ENCODE measurements at regions of chr15 and their contacts with region 1.

Region 1: DNA sequence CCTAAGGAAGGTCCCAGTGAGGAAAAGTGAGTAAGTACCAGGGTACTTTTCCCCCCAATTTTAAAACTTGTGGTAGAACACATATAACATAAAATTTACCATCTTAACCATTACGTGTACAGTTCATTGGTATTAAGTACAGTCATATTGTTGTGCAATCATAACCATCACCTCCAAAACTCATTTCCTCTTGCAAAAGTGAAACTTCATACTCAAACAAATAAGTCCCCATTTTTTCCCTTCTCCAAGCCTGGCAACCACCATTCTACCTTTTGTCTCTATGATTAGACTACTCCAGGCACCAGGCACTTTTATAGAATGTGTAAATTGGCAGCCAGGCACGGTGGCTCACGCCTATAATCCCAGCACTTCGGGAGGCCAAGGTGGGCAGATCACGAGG is 12.2 kb downstream of the PRC1 start:
- DNase-seq: no peak
- ATAC-seq: no peak
- H3K4me3 ChIP-seq: no peak overlapping the region
- H3K27ac ChIP-seq: no peak overlapping the region
- H3K4me1 ChIP-seq: peaks cover under 1 to 4% of the 10 kb centered on the region in 2 experiments; a peak in 2 of 5 replicates
- H3K27me3 ChIP-seq: no peaks in the 10 kb centered on the region
- CTCF ChIP-seq: no peak
- EP300 ChIP-seq: no peak
- POLR2A ChIP-seq: no peak
- RAD21 ChIP-seq: no peak

Region 2: DNA sequence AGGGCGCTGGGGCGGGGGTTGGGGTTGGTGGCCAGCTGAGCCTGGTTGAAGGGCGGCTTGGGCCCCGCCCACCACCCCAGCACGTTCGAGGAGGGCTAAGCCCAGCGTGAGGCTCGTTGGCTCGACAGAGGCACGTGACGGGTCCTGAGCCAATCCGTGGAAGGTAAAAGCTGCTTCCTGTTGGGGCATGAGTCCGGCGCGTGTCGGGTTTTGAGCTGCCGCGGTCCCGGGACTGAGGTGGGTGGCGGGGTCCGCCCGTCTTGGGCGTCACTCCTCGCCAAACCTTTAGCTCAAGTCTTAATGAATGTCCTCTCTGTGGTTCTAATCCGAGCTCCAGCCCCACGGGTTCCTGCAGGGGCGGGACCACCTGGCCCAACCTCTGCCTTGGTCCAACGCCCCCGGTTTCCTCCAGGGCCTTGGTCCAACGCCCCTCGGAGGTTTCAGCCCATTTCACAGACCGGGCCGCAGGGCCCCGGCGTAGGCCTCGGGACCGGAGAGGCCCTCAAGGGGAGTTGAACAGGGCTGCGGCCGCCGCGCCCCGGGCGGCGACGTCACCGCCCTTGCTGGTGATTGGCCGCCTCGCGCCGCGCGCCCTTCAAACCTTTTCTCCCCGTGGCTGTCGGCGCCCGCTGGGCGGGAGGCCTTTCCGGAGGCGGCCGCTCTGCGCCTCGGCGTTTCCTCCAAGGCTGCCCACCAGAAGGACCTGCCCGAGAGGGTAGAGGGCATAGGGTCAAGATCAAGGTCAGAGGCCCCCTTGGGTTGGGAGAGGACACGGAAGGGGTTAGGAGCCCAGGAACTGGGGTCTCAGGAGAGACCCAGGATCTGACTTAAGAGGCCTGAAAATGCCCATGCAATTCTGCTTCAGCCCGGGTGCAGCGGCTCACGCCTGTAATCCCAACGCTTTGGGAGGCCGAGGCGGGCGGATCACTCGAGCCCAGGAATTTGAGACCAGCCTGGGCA is 27.1 kb before region 1 on chr15 and contains the start of gene RCCD1:
- CTCF ChIA-PET with region 1: no interaction called
- POLR2A ChIA-PET with region 1: interaction called, 10 read pairs
- in situ Hi-C with region 1: no loop called
- intact Hi-C with region 1: no loop called
- DNase-seq: peak; percentile 97 to 98 (median 98)
- ATAC-seq: peak; percentile 96
- H3K4me3 ChIP-seq: peak within 1 kb of the TSS; percentile 50
- H3K27ac ChIP-seq: peak within 1 kb of the TSS; percentile 95
- H3K4me1 ChIP-seq: peaks cover 9 to 48% of the 10 kb centered on the region in 2 experiments; a peak in 4 of 5 replicates
- H3K27me3 ChIP-seq: no peaks in the 10 kb centered on the region
- CTCF ChIP-seq: no peak
- EP300 ChIP-seq: peak; percentile 21; the same call in 1 of the 2 replicates
- POLR2A ChIP-seq: peak; percentile 93
- RAD21 ChIP-seq: 0 out of 4 replicates have a peak, but pooled peaks of 1 of the 2 experiments have one; percentile 6
- polyA plus RNA-seq, gene RCCD1: 11.1 to 12.2 TPM

Measured in K562 (cell line).